ENCODE measurements at regions of chr13 and their contacts with region 1.

Region 1: DNA sequence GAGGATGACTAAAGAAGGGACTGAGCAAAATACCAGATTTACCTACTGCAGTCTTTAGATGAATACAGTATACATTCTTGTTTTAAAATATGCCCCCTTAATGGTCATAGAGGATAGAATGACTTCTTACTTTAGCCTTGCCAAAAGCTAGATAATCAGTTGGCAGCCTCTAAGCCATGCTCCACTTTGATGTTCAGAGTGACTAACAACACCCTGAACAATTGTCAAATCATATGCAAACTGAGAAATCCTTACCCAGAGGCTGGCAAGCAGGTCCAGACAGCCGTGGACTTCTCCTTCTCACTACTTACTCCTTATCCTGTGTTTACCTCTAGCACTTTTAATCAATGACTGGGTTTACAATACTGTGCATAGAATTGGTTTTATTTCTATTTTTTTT is 23.6 kb upstream of the PHF11 start:
- DNase-seq: no peak
- H3K4me3 ChIP-seq: no peak overlapping the region
- H3K27ac ChIP-seq: no peak overlapping the region
- H3K4me1 ChIP-seq: no peaks in the 10 kb centered on the region
- H3K27me3 ChIP-seq: no peaks in the 10 kb centered on the region
- CTCF ChIP-seq: no peak
- POLR2A ChIP-seq: no peak

Region 2: DNA sequence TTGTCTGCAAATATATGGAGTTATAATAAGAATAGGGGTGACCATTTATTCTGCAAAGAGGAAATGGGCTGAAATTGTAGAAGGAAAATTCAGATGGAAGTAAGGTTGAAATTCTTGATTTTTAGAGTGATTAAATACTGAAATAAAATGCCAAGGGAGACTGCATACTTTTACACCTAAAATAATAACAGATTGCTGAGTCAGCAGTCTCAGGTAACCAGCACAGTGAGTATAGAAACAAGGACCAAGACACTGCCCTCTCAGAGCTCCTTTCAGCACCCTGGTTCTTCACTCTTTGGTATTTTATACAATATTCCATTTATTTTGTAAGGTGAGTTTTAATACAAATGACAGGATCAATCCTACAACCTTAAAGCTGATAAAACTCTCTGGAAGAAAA is 300.8 kb before region 1 on chr13:
- CTCF ChIA-PET with region 1: no interaction called
- POLR2A ChIA-PET with region 1: no interaction called
- dilution Hi-C with region 1: no loop called
- intact Hi-C with region 1: no loop called
- DNase-seq: no peak
- H3K4me3 ChIP-seq: no peak overlapping the region
- H3K27ac ChIP-seq: no peak overlapping the region
- H3K4me1 ChIP-seq: no peaks in the 10 kb centered on the region
- H3K27me3 ChIP-seq: no peaks in the 10 kb centered on the region
- CTCF ChIP-seq: no peak
- POLR2A ChIP-seq: no peak

Region 3: GRCh38 chr13:49716615-49717014 is 244.4 kb after region 1 on chr13:
- CTCF ChIA-PET with region 1: no interaction called
- POLR2A ChIA-PET with region 1: interaction called, 10 read pairs
- dilution Hi-C with region 1: no loop called
- intact Hi-C with region 1: no loop called
- DNase-seq: no peak
- H3K4me3 ChIP-seq: no peak overlapping the region
- H3K27ac ChIP-seq: no peak overlapping the region
- H3K4me1 ChIP-seq: no peaks in the 10 kb centered on the region
- H3K27me3 ChIP-seq: no peaks in the 10 kb centered on the region
- CTCF ChIP-seq: no peak
- POLR2A ChIP-seq: no peak